ENCODE measurements at regions of chr1 and their contacts with region 1.

Region 1: GRCh38 chr1:13813398-13814012 is 113.5 kb downstream of the PRDM2 start:
- DNase-seq: peak; percentile 45 to 78 (median 76)
- ATAC-seq: peak; percentile 5 to 34
- H3K4me3 ChIP-seq: no peak overlapping the region
- H3K27ac ChIP-seq: no peak overlapping the region
- H3K4me1 ChIP-seq: no peaks in the 10 kb centered on the region
- H3K27me3 ChIP-seq: no peaks in the 10 kb centered on the region

Region 2: GRCh38 chr1:13662493-13662892 is 151.0 kb before region 1 on chr1:
- intact Hi-C with region 1: loop called in 2 of 4 experiments (anchors 5 to 10 kb)
- DNase-seq: no peak
- ATAC-seq: peak in 1 of 2 donors; percentile 31
- H3K4me3 ChIP-seq: no peak overlapping the region
- H3K27ac ChIP-seq: no peak overlapping the region
- H3K4me1 ChIP-seq: no peaks in the 10 kb centered on the region
- H3K27me3 ChIP-seq: no peaks in the 10 kb centered on the region

Measured in right cardiac atrium (tissue), 5 donors.